ENCODE measurements at regions of chr7 and their contacts with region 1.

Region 1: GRCh38 chr7:149028346-149029109 is at the start of gene PDIA4:
- DNase-seq: peak; percentile 98 to 100
- H3K4me3 ChIP-seq: peak within 1 kb of the TSS; percentile 67 to 100
- H3K27ac ChIP-seq: peak within 1 kb of the TSS; percentile 83 to 95
- H3K4me1 ChIP-seq: peaks cover 0 to 8% of the 10 kb centered on the region in 2 donors
- H3K27me3 ChIP-seq: no peaks in the 10 kb centered on the region
- CTCF ChIP-seq: peak in 2 of 3 experiments; percentile 13 to 23
- total RNA-seq, gene PDIA4: 129 TPM

Region 2: DNA sequence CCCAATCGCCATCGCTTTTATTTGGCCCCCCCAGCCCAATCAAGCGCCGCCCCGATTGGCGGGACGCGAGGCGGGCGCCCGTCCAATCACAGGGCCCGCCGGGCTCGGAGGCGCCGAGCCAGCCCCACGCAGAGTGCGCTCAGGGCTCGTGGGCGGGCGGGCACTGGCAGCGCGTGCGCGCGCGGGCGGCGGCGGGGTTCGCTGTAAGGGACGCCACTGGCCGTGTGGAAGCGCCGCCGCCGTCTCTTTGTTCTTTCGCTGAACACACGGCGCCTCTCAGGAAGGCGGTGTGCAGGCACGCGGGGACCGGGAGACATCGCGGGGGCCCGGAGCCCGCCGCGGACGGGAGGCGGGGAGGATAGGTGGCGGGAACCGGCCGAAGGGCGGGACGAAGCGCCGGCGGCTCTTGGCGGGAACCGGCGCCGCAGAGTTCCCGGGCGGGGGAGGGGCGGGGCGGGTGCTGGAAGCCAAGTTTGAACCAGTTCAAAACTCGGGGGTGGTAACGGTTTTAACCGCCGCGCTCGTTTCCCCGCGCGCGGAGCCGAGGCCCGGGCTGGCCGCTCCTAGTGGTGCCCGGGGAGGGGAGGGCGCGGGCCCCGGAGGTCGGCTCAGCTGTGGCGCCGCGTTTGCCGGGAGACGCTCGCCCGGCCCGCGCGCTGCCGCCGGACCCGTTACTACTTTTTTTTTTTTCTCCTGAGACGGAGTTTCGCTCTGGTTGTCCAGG is 144.1 kb before region 1 on chr7:
- intact Hi-C with region 1: loop called (anchors 2 kb)
- DNase-seq: peak; percentile 75 to 95
- H3K4me3 ChIP-seq: peak overlapping the region; percentile 93
- H3K27ac ChIP-seq: peak overlapping the region; percentile 88 to 91
- H3K4me1 ChIP-seq: no peaks in the 10 kb centered on the region
- H3K27me3 ChIP-seq: no peaks in the 10 kb centered on the region
- CTCF ChIP-seq: no peak

Region 3: DNA sequence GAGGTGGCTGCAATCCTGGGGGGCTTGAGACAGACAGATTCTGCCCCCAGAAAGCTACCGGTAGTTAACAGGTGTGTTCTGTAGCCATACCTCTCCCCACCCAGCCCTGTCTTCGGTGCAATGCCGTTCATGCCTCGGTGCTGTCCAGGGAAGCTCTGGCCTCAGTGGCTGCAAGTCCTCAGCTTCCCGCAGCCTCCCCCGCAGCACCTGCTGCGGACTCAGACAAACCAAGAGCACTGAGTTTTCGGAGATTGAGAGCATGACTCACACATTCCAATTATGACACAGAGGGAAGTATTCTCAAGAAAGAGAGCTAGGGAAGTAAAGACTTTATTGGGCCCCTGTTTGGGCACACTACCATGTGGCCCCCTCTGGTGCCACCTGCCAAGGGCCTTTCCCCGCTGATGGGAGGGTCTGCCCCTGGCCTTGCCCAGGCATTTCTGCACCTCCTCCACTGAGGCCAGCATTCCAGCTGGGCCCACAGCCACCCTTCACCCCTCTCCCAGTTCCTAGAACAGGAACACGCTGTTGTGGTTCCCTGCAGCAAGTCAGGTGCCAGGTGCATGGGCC is 114.2 kb before region 1 on chr7:
- intact Hi-C with region 1: no loop called
- DNase-seq: no peak
- H3K4me3 ChIP-seq: no peak overlapping the region
- H3K27ac ChIP-seq: no peak overlapping the region
- H3K4me1 ChIP-seq: no peaks in the 10 kb centered on the region
- H3K27me3 ChIP-seq: no peaks in the 10 kb centered on the region
- CTCF ChIP-seq: no peak

Region 4: DNA sequence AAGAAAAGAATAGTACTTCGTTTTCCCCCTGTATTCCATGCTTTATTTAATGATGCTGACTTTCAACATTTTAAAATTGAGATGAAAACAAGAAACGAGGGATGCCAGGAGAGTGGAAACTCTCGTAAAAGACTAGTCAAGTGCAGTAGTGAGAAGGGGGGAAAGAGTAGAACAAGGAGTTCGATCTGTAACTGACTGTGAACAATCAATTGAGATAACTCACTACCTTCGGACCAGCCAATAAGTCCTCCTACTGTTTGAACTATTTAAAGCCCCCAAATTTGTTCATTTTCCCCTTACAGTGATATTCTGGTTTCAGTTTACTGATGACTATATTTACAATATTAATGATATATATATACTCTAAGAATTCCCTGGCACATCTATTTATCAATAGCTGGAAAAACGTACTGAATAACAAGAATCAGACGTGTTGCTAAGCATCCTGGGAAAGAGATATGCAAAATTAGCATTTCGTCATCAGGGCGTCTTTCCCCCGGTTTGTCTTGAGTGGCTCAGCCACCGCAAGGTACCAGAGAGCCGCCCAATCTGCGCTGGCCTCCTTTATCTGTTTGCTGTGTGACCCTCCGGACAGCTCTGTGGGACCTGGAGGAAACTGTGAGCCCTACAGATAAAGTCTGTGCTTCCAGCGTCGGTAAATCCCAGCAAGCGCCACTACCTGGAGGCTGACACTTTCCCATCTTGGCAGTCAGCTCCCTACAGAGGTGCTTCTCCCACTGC is 41.3 kb before region 1 on chr7:
- intact Hi-C with region 1: loop called (anchors 1 kb)
- DNase-seq: peak; percentile 47 to 93
- H3K4me3 ChIP-seq: peak overlapping the region; percentile 70 to 72
- H3K27ac ChIP-seq: peak overlapping the region; percentile 88 to 94
- H3K4me1 ChIP-seq: peaks cover 0 to 16% of the 10 kb centered on the region in 2 donors
- H3K27me3 ChIP-seq: no peaks in the 10 kb centered on the region
- CTCF ChIP-seq: no peak

Region 5: DNA sequence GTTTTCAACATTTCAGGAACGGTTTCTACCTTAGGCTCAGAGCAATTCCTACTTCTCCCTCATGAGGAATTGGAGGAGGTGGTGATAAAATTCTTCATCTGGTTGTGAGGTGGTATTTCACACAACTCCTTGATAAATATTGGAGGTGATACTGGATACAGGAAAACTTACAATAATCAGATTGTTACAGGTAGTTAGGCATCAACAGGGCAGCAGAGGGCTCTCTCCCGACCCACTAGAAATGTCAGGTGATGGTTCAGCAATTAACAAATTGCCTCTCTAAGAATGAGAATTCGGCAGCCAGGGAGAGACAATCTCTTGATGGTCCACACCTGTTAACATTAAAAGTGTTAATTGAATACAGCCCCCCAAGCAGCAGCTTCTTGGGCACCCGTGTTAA is 39.3 kb after region 1 on chr7:
- intact Hi-C with region 1: loop called (anchors 1 kb)
- DNase-seq: no peak
- H3K4me3 ChIP-seq: no peak overlapping the region
- H3K27ac ChIP-seq: no peak overlapping the region
- H3K4me1 ChIP-seq: no peaks in the 10 kb centered on the region
- H3K27me3 ChIP-seq: no peaks in the 10 kb centered on the region
- CTCF ChIP-seq: no peak

Region 6: DNA sequence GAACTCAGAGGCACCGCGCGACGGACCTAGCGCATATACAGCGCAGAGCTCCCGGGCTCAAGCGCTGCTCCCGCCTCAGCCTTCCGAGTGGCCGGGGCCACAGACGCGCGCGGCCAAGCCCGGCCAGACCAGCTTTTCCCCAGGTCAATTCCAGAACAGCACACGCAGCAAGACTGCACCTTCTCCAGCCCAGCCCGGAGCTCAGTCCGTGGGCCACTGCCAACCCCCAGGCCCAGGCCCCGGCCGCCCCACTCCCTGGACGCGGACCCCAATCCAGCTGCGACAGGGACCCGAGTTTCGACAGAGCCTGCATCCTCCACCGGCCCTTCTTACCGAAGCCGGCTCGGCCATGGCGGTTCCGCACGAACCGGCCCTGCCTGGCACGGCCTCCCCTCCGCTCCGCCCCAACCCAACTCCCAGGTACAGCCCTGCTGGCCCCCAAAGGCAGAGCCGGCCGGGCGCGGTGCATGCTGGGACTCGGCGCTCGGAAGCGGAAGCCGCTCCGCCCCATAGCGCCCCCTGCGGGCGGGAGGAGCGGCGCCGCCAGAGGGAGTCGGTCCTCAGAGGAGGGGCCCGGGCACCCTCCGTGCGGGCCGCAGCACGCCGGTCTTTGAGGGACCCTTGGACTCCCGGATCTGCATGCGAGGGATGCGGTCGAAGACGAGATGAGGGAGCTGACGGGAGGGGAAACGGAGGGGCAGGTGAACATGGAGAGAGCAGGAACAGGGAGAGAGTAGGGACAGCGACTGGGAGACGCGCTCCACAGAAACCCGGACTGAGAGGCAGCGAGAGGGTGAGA is 97.5 kb after region 1 on chr7 and contains the start of gene ZNF425:
- intact Hi-C with region 1: loop called (anchors 1 kb)
- DNase-seq: peak; percentile 49 to 96
- H3K4me3 ChIP-seq: peak within 1 kb of the TSS; percentile 88 to 92
- H3K27ac ChIP-seq: peak within 1 kb of the TSS; percentile 82 to 96
- H3K4me1 ChIP-seq: peaks cover 6 to 8% of the 10 kb centered on the region in 2 donors
- H3K27me3 ChIP-seq: no peaks in the 10 kb centered on the region
- CTCF ChIP-seq: peak; percentile 96 to 97 (median 97)
- total RNA-seq, gene ZNF425: not detected

Region 7: GRCh38 chr7:149195180-149196150 is 166.9 kb after region 1 on chr7 and contains the start of gene ZNF282:
- intact Hi-C with region 1: loop called (anchors 5 kb)
- DNase-seq: peak; percentile 56 to 96
- H3K4me3 ChIP-seq: peak within 1 kb of the TSS; percentile 79 to 98
- H3K27ac ChIP-seq: peak within 1 kb of the TSS; percentile 80 to 95
- H3K4me1 ChIP-seq: peaks cover 20 to 22% of the 10 kb centered on the region in 2 donors
- H3K27me3 ChIP-seq: no peaks in the 10 kb centered on the region
- CTCF ChIP-seq: peak; percentile 61 to 77 (median 66)
- total RNA-seq, gene ZNF282: 17.9 TPM

Region 8: GRCh38 chr7:149559711-149560110 is 531.2 kb after region 1 on chr7:
- intact Hi-C with region 1: no loop called
- DNase-seq: no peak
- H3K4me3 ChIP-seq: no peak overlapping the region
- H3K27ac ChIP-seq: no peak overlapping the region
- H3K4me1 ChIP-seq: no peaks in the 10 kb centered on the region
- H3K27me3 ChIP-seq: no peaks in the 10 kb centered on the region
- CTCF ChIP-seq: no peak

Region 9: GRCh38 chr7:149838224-149838947 is 809.9 kb after region 1 on chr7 and contains the start of gene ZNF862:
- intact Hi-C with region 1: loop called (anchors 5 kb)
- DNase-seq: peak; percentile 92 to 98
- H3K4me3 ChIP-seq: peak within 1 kb of the TSS; percentile 84 to 94
- H3K27ac ChIP-seq: peak within 1 kb of the TSS; percentile 86 to 93
- H3K4me1 ChIP-seq: peaks cover 0 to 8% of the 10 kb centered on the region in 2 donors
- H3K27me3 ChIP-seq: no peaks in the 10 kb centered on the region
- CTCF ChIP-seq: no peak
- total RNA-seq, gene ZNF862: 1.7 TPM

Measured in ascending aorta (tissue), 2 donors.